Mammary epithelial cell (primary cell): ENCODE measurements at regions of chr7 and their contacts with region 1.

Region 1: DNA sequence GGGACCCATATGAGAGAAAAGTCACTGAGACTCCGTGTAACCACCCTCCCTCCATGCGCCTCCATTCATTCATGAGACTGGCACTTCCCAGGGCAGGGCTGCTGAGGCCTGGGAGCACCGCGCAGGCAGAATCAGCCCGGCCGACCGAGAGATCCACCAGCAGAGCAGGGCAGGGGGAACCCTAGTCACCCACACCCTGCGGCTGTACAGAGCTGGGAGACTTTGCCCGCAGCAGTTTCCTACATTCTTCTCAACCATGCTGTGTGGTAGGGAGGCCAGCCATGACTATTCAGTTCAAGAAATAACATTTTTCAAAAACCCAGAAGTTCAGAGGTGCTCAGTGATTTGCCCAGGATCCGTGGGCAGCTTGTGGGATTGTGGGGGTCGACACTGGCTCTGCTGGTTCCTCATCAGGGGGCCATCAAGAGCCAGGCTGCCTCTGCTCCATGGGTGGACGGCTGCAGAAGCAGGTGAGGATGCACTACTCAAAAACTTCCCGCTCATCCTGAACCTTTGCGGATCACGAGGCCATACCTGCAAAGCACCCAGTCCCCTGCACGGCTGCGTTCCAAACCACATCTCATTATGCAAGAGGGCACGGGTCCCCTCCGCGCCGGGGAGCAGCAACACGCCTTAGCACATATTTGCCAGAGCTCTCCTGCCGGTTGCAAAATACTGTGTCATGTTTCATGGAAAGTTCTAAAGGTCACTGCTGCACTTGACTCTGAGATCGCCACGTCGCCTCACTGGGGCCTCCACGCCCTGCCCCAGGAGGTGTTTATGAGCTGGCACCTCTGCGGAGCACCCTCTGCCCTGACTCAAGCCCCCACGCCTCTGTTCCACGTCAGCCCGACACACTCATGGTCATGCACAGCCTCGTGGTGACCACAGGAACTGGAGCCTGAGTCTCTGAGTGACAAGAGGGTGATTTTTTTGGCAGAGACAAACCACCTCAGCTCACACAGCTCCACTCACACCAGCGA is 132.0 kb downstream of the PRKAG2 start:
- DNase-seq: peak; percentile 61
- H3K4me3 ChIP-seq: no peak overlapping the region
- H3K27ac ChIP-seq: no peak overlapping the region
- H3K4me1 ChIP-seq: peaks cover 11% of the 10 kb centered on the region
- H3K27me3 ChIP-seq: no peaks in the 10 kb centered on the region
- CTCF ChIP-seq: peak; percentile 20 to 45

Region 2: GRCh38 chr7:150974468-150975391 is 770.2 kb before region 1 on chr7:
- CTCF ChIA-PET with region 1: no interaction called
- dilution Hi-C with region 1: no loop called
- in situ Hi-C with region 1: no loop called
- intact Hi-C with region 1: no loop called
- DNase-seq: no peak
- H3K4me3 ChIP-seq: peak overlapping the region in 2 of 3 experiments; percentile 39 to 48
- H3K27ac ChIP-seq: no peak overlapping the region
- H3K4me1 ChIP-seq: peaks cover 6% of the 10 kb centered on the region
- H3K27me3 ChIP-seq: peaks cover 15% of the 10 kb centered on the region
- CTCF ChIP-seq: peak in 1 of 2 donors; percentile 35

Region 3: GRCh38 chr7:151648429-151648828 is 96.5 kb before region 1 on chr7:
- CTCF ChIA-PET with region 1: no interaction called
- dilution Hi-C with region 1: loop called (anchors 10 kb)
- in situ Hi-C with region 1: no loop called
- intact Hi-C with region 1: no loop called
- DNase-seq: no peak
- H3K4me3 ChIP-seq: no peak overlapping the region
- H3K27ac ChIP-seq: no peak overlapping the region
- H3K4me1 ChIP-seq: peaks cover 26% of the 10 kb centered on the region
- H3K27me3 ChIP-seq: no peaks in the 10 kb centered on the region
- CTCF ChIP-seq: no peak

Region 4: GRCh38 chr7:151782598-151783448 is 37.9 kb after region 1 on chr7:
- CTCF ChIA-PET with region 1: no interaction called
- dilution Hi-C with region 1: no loop called
- in situ Hi-C with region 1: no loop called
- intact Hi-C with region 1: no loop called
- DNase-seq: peak; percentile 38
- H3K4me3 ChIP-seq: peak overlapping the region; percentile 12 to 32 (median 31)
- H3K27ac ChIP-seq: no peak overlapping the region
- H3K4me1 ChIP-seq: peaks cover 9% of the 10 kb centered on the region
- H3K27me3 ChIP-seq: no peaks in the 10 kb centered on the region
- CTCF ChIP-seq: peak; percentile 69 to 89